ENCODE measurements at regions of chr2 and their contacts with region 1.

Region 1: DNA sequence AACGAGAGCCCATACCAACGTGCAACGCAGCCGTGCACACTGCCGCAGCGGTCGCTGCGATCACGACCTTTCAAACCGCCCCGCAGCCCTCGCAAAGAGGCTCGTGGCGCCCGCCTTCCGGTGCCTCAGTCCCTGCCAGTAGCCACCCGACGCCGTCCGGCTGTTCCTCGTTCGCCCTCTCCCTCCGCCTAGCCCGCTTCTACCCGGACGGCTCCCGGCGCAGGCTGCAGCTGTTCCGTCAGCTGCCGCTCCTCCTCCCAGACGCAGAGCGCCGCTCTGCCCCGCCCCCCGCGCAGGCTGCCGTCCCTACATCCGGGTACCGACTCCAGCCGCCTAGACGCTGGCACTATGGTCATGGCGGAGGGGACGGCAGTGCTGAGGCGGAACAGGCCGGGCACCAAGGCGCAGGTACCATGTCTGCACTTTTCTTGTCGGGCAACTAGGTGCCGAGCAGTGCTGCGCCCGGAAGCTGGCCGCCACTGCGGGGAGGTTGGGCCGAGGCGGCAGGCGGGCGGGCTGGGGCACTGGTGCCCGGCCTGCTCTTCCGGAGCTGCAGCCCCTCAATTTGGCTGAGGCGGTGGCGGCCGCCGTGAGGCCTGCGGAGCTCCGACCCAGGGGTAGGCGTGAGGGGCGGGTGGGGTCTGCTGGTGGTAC is at the start of gene MOB4:
- DNase-seq: peak; percentile 94
- H3K4me3 Mint-ChIP-seq: peak within 1 kb of the TSS; percentile 99
- H3K27ac Mint-ChIP-seq: peak within 1 kb of the TSS; percentile 84
- H3K4me1 Mint-ChIP-seq: peaks cover 19% of the 10 kb centered on the region
- H3K27me3 Mint-ChIP-seq: no peaks in the 10 kb centered on the region
- total RNA-seq, gene MOB4: 18.1 and 19.5 TPM in 2 replicates

Region 2: DNA sequence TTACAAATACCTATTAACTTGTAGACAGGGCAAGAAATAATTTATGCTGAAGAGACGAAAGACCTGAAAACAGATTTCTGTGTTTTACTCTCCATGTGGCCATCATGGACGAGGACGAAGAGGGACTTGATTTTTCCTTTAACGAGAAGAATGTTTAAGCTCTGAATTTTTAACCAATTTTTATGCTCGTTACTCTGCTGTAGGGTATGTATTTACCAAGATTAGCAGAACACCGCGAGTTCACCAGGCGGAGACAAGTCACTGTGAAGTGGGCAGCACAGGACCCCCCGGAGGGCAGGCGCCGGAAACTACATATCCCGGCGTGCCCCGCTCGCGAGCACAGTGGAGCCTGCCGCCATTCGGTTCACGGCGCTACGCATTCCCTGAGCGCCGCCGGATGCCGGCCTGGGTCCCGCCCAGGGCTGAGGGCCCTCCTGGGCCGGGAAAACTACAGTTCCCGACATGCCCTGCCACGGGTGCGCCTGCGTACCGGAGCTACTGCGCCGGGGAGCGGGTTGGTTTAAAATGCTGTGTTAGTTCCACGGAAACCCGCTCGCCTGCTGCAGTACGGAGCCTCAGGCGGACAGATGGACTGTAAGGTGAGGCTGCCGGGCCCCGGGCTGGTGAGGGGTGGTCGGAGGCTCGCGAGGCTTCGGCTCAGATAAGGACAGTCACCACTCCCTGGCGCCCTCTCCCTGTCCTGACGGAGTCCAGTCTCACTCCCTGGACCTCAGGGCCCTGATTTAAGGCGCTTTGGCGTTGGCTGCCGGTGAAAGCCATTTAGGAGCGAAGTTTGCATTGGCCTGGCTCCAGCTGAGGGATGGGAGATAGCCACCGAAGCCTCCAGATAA is 876.5 kb before region 1 on chr2 and contains the start of gene CCDC150:
- intact Hi-C with region 1: loop called (anchors 2 kb)
- DNase-seq: peak; percentile 93
- H3K4me3 Mint-ChIP-seq: peak within 1 kb of the TSS; percentile 90
- H3K27ac Mint-ChIP-seq: peak within 1 kb of the TSS; percentile 65
- H3K4me1 Mint-ChIP-seq: peaks cover 24% of the 10 kb centered on the region
- H3K27me3 Mint-ChIP-seq: peaks cover 11% of the 10 kb centered on the region
- total RNA-seq, gene CCDC150: 13.6 and 17.8 TPM in 2 replicates

Region 3: GRCh38 chr2:197293252-197294007 is 222.4 kb before region 1 on chr2:
- intact Hi-C with region 1: no loop called
- DNase-seq: no peak
- H3K4me3 Mint-ChIP-seq: peak overlapping the region; percentile 79
- H3K27ac Mint-ChIP-seq: peak overlapping the region; percentile 94
- H3K4me1 Mint-ChIP-seq: peaks cover 80% of the 10 kb centered on the region
- H3K27me3 Mint-ChIP-seq: no peaks in the 10 kb centered on the region

Region 4: DNA sequence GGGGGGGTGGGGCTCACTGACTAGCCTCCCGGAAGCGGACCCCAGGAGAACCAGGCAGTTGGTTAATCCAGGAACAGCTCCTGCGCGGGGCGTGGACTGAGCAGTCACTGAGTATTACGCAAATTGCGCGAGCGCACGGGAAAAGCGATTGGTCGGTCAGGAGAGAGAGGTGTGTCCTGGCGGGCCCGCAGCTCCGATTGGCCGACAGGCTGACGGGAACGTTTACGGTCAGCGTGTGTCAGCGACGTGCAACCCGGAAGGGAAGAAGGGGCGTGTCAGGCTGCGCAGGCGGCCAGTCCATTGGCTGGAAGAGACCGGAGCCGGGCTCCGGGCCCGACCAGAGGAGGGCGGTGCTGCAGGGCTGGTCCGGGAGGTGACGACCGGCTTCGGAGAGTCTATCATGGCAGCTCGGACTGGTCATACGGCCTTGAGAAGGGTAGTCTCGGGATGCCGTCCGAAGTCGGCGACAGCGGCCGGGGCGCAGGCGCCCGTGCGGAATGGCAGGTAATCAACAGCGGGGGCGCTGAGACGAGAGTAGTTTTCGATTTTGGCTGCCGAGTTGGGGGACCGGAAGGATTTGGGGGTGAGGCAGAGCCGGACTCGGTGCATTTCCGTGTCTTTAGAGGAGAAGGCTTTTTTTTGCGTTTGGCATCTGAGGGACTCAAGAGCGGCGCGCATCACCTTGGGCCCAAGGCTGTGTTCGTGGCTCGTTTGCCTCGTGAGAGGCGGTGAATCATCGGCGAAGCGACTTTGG is 62.5 kb before region 1 on chr2 and contains the start of gene COQ10B:
- intact Hi-C with region 1: loop called (anchors 1 kb)
- DNase-seq: peak; percentile 99
- H3K4me3 Mint-ChIP-seq: peak within 1 kb of the TSS; percentile 99
- H3K27ac Mint-ChIP-seq: peak within 1 kb of the TSS; percentile 100
- H3K4me1 Mint-ChIP-seq: peaks cover 26% of the 10 kb centered on the region
- H3K27me3 Mint-ChIP-seq: no peaks in the 10 kb centered on the region
- total RNA-seq, gene COQ10B: 19.9 and 20.8 TPM in 2 replicates

Region 5: GRCh38 chr2:197499594-197500526 is 16.0 kb before region 1 on chr2 and contains the starts of genes HSPD1 and HSPE1:
- intact Hi-C with region 1: loop called (anchors 1 kb)
- DNase-seq: peak; percentile 99
- H3K4me3 Mint-ChIP-seq: peak within 1 kb of the TSS; percentile 94
- H3K27ac Mint-ChIP-seq: peak within 1 kb of the TSS; percentile 97
- H3K4me1 Mint-ChIP-seq: peaks cover 41% of the 10 kb centered on the region
- H3K27me3 Mint-ChIP-seq: no peaks in the 10 kb centered on the region
- total RNA-seq, gene HSPD1: 749 and 761 TPM in 2 replicates
- total RNA-seq, gene HSPE1: 301 and 309 TPM in 2 replicates

Region 6: GRCh38 chr2:197777823-197778407 is 262.0 kb after region 1 on chr2:
- intact Hi-C with region 1: loop called (anchors 10 kb)
- DNase-seq: no peak
- H3K4me3 Mint-ChIP-seq: no peak overlapping the region
- H3K27ac Mint-ChIP-seq: no peak overlapping the region
- H3K4me1 Mint-ChIP-seq: peaks cover 4% of the 10 kb centered on the region
- H3K27me3 Mint-ChIP-seq: peaks cover 17% of the 10 kb centered on the region

Region 7: GRCh38 chr2:197838036-197838435 is 322.2 kb after region 1 on chr2:
- intact Hi-C with region 1: no loop called
- DNase-seq: no peak
- H3K4me3 Mint-ChIP-seq: peak overlapping the region; percentile 53
- H3K27ac Mint-ChIP-seq: peak overlapping the region; percentile 68
- H3K4me1 Mint-ChIP-seq: peaks cover 44% of the 10 kb centered on the region
- H3K27me3 Mint-ChIP-seq: peaks cover 4% of the 10 kb centered on the region